Calu3 (cell line): ENCODE measurements at regions of chr15 and their contacts with region 1.

Region 1: GRCh38 chr15:91694831-91695210 is 158.7 kb upstream of the SLCO3A1 start:
- DNase-seq: peak; percentile 21
- H3K4me3 Mint-ChIP-seq: no peak overlapping the region
- H3K27ac Mint-ChIP-seq: no peak overlapping the region
- H3K4me1 Mint-ChIP-seq: no peaks in the 10 kb centered on the region
- H3K27me3 Mint-ChIP-seq: no peaks in the 10 kb centered on the region
- CTCF ChIP-seq: no peak

Region 2: DNA sequence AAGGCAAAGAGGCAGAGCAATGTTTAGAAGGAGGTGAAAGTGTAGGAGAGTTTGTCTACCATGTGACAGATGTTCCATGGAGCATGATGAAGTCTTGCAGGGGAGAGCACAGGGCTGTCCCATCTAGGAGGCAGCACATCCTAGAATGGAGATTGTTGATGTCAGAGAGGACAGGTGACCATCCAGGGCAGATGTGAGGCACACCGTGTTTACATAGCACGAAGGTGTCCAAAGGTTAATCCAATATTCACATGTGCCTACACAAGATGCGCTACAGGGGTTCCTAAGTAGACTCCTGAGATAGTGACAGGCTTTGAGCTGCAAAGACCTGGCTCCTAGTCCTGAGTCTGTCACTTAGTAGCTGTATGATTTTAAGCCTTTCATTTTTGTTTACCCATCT is 60.6 kb before region 1 on chr15:
- CTCF ChIA-PET with region 1: no interaction called
- intact Hi-C with region 1: no loop called
- DNase-seq: no peak
- H3K4me3 Mint-ChIP-seq: no peak overlapping the region
- H3K27ac Mint-ChIP-seq: no peak overlapping the region
- H3K4me1 Mint-ChIP-seq: no peaks in the 10 kb centered on the region
- H3K27me3 Mint-ChIP-seq: no peaks in the 10 kb centered on the region
- CTCF ChIP-seq: no peak

Region 3: GRCh38 chr15:91723959-91724358 is 29.1 kb after region 1 on chr15:
- CTCF ChIA-PET with region 1: interaction called, 11 read pairs
- intact Hi-C with region 1: no loop called
- DNase-seq: no peak
- H3K4me3 Mint-ChIP-seq: no peak overlapping the region
- H3K27ac Mint-ChIP-seq: no peak overlapping the region
- H3K4me1 Mint-ChIP-seq: no peaks in the 10 kb centered on the region
- H3K27me3 Mint-ChIP-seq: peaks cover 49% of the 10 kb centered on the region
- CTCF ChIP-seq: no peak